Ascending aorta (tissue), 2 donors: ENCODE measurements at regions of chr7 and their contacts with region 1.

Region 1: DNA sequence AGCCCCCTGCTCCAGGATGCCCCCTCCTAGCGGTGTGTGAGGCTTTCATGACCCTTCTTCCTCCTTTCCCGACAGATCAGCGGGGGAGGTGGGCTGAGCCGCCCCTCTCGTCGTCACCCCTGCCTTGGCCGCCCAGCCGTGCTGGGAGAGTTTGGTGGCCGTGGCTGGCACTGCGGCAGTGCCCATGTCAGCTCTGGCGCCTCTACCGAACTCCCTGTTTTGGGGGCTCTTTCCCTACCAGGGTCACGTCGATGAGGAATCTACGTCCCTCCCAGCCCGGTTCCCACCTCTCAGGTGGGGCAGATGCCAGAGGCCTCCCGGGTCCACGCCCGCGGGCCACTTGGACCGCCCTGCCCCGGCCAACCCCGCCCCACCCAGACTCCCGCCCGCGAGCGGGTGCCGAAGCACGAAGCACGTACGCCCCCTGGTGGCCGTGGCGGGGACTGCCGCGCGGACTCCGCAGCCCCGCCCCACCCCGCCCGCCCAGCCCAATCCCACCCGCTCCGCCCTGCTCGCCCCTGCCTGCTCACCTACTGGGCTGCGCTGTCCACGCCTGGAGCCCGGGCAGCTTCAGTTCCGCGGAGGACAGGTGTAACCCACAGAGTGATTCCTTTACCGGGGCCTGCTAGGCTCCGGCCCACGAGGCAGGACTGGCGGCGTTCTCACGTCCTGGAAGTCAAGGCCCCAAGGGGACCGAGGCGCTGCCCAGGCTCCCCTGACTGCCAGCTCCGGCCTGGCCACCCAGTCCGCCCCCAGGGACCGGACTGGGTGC is 127.1 kb downstream of the UBE2H start:
- DNase-seq: peak in 1 of 2 donors; percentile 93
- H3K4me3 ChIP-seq: peak overlapping the region; percentile 65 to 82
- H3K27ac ChIP-seq: peak overlapping the region; percentile 69 to 74
- H3K4me1 ChIP-seq: peaks cover 0 to 23% of the 10 kb centered on the region in 2 donors
- H3K27me3 ChIP-seq: no peaks in the 10 kb centered on the region
- CTCF ChIP-seq: peak; percentile 76 to 97 (median 95)

Region 2: DNA sequence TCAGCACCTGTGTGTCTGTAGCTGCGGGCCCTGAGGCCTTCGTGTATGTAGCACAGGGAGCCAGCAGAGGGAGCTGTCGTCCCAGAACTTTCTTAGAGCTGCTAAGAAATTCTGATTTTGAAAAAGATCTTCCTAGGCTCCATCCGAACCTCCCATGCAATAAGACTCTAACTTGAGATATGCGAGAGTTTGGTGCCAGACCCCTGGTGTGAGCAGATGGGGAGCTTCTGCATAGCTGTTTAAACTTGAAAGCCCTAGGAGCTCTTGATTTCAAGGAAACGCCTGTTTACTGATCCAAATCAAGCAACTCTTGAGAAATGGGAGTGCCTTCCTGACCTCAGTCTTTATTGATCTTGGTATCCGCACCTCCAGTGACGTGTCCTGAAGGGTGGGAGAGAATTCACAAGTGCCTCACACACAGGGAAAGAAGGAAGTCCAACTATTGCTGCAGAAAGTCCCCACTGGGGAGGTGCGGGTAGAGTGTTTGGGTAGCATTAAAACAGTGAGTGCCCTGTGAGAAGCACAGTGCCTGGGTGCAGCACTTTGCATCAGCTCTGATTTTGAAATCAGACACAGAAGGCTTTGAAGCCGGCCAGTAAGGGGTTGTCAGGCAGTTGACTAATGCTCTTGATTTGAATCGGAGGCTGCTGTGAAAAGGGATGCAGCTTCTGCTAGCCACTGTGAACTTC is 457.8 kb before region 1 on chr7:
- intact Hi-C with region 1: loop called (anchors 10 kb)
- DNase-seq: peak; percentile 12 to 74
- H3K4me3 ChIP-seq: peak overlapping the region in 1 of 2 donors; percentile 33
- H3K27ac ChIP-seq: no peak overlapping the region
- H3K4me1 ChIP-seq: no peaks in the 10 kb centered on the region
- H3K27me3 ChIP-seq: no peaks in the 10 kb centered on the region
- CTCF ChIP-seq: peak; percentile 70 to 87 (median 81)

Region 3: GRCh38 chr7:129664029-129665012 is 161.4 kb before region 1 on chr7:
- intact Hi-C with region 1: loop called (anchors 2 kb)
- DNase-seq: no peak
- H3K4me3 ChIP-seq: no peak overlapping the region
- H3K27ac ChIP-seq: no peak overlapping the region
- H3K4me1 ChIP-seq: no peaks in the 10 kb centered on the region
- H3K27me3 ChIP-seq: no peaks in the 10 kb centered on the region
- CTCF ChIP-seq: peak; percentile 22 to 38 (median 22)

Region 4: DNA sequence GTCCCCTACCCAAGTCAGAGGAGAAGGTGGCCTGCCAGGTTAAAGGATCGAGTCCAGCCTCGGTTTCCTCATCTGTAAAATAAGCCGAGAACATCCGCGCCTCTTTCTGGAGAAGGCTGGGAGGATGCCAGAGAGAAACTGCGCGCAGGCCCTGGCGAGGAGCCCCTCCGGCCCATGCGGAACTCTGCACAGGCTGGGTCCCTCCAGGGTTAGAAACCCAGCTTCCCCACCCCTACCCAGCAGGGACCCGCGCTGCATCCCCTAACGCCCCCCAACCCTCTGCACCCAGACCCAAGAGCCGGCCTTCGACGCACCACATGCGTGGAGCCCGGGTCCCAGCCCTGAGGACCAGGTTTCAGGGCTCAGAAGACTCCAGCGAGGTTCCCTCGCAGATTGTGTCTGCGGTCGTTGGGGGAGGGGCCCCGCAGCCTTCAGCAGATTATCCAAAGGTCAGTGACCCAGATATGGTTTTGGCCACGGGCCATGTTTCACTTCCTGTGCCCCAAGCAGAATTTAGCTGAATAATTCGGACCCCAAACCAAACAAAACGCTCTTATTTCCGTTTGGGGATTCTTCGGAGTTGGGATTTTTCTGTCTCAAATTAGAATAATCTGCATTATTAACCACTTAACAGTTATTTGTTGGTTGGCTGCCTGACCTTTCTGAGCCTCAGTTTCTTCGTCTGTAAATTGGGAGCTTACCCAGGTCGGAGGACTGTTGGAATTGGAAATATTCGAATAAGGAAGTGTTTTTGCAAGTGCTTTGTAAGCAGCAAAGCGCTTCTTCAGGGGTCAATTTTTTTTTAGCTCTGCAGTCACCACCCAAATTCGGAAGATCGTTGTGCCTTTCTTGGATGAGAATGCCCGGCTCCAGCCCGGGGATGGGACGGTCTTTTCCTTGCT is 40.6 kb before region 1 on chr7:
- intact Hi-C with region 1: no loop called
- DNase-seq: no peak
- H3K4me3 ChIP-seq: peak overlapping the region; percentile 18 to 39
- H3K27ac ChIP-seq: no peak overlapping the region
- H3K4me1 ChIP-seq: peaks cover 16 to 41% of the 10 kb centered on the region in 2 donors
- H3K27me3 ChIP-seq: peaks cover 45% of the 10 kb centered on the region
- CTCF ChIP-seq: no peak

Region 5: GRCh38 chr7:129864042-129864441 is 38.4 kb after region 1 on chr7:
- intact Hi-C with region 1: loop called (anchors 2 kb)
- DNase-seq: peak in 1 of 2 donors; percentile 89
- H3K4me3 ChIP-seq: no peak overlapping the region
- H3K27ac ChIP-seq: peak overlapping the region; percentile 88 to 96
- H3K4me1 ChIP-seq: peaks cover 13 to 79% of the 10 kb centered on the region in 2 donors
- H3K27me3 ChIP-seq: no peaks in the 10 kb centered on the region
- CTCF ChIP-seq: no peak

Region 6: GRCh38 chr7:129882531-129882930 is 56.8 kb after region 1 on chr7:
- intact Hi-C with region 1: no loop called
- DNase-seq: no peak
- H3K4me3 ChIP-seq: no peak overlapping the region
- H3K27ac ChIP-seq: peak overlapping the region; percentile 48 to 51
- H3K4me1 ChIP-seq: peaks cover 5 to 41% of the 10 kb centered on the region in 2 donors
- H3K27me3 ChIP-seq: no peaks in the 10 kb centered on the region
- CTCF ChIP-seq: no peak

Region 7: DNA sequence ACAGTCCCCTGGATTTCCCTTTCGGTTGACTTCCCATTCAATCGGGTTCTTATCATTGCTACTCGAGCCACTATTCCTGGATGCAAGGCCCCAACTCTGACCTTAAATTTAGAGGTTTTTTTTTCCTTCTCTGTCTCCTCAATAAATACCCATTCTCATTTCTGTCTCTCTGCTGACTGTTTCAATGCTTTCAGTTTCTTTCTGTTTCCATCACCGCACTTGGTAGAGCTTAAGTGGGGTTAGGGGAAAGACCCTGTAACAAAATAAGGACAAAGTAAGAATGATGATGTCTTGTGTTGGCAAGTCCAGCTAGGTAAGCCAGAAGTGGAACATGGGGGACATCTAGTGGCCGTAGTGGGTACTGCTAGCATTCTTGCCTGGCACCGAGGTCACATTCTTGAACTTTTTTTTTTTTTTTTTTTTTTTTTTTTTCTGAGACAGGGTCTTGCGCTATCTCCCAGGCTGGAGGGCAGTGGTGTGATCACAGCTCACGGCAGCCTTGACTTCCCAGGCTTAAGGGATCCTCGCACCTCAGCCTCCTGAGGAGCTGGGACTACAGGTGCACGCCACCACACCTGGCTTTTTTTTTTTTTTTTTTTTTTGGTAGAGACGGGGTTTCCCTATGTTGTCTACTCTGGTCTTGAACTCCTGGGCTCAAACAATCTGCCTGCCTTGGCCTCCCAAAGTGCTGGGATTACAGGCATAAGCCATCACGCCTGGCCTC is 185.2 kb after region 1 on chr7:
- intact Hi-C with region 1: loop called (anchors 1 kb)
- DNase-seq: peak; percentile 43 to 92
- H3K4me3 ChIP-seq: no peak overlapping the region
- H3K27ac ChIP-seq: peak overlapping the region; percentile 75 to 78
- H3K4me1 ChIP-seq: peaks cover 10 to 13% of the 10 kb centered on the region in 2 donors
- H3K27me3 ChIP-seq: no peaks in the 10 kb centered on the region
- CTCF ChIP-seq: peak; percentile 84 to 90 (median 90)